ENCODE measurements at regions of chr17 and their contacts with region 1.

Region 1: GRCh38 chr17:32111141-32111771 is 31.0 kb upstream of the RHOT1 start:
- DNase-seq: peak; percentile 71
- H3K4me3 Mint-ChIP-seq: no peak overlapping the region
- H3K27ac Mint-ChIP-seq: no peak overlapping the region
- H3K4me1 Mint-ChIP-seq: peaks cover 18% of the 10 kb centered on the region
- H3K27me3 Mint-ChIP-seq: no peaks in the 10 kb centered on the region

Region 2: DNA sequence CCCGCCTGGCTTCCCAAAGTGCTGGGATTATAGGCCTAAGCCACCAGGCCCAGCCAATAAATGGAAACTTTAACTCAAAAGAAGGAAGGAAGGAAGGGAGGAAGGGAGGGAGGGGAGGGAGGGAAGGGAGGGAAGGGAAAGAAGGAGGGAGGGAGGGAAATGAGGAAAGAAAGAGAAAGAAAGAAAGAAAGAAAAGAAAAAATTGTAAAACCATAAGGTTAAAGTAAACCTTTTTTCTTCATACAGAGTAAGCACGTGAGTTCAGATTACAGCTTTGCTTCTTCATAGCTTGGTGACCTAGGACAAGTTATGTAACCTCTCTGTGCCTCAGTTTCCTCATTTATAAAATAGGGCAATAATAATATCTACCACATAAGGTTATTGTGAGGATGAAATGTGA is 78.0 kb before region 1 on chr17:
- CTCF ChIA-PET with region 1: no interaction called
- intact Hi-C with region 1: no loop called
- DNase-seq: no peak
- H3K4me3 Mint-ChIP-seq: no peak overlapping the region
- H3K27ac Mint-ChIP-seq: no peak overlapping the region
- H3K4me1 Mint-ChIP-seq: no peaks in the 10 kb centered on the region
- H3K27me3 Mint-ChIP-seq: no peaks in the 10 kb centered on the region

Region 3: DNA sequence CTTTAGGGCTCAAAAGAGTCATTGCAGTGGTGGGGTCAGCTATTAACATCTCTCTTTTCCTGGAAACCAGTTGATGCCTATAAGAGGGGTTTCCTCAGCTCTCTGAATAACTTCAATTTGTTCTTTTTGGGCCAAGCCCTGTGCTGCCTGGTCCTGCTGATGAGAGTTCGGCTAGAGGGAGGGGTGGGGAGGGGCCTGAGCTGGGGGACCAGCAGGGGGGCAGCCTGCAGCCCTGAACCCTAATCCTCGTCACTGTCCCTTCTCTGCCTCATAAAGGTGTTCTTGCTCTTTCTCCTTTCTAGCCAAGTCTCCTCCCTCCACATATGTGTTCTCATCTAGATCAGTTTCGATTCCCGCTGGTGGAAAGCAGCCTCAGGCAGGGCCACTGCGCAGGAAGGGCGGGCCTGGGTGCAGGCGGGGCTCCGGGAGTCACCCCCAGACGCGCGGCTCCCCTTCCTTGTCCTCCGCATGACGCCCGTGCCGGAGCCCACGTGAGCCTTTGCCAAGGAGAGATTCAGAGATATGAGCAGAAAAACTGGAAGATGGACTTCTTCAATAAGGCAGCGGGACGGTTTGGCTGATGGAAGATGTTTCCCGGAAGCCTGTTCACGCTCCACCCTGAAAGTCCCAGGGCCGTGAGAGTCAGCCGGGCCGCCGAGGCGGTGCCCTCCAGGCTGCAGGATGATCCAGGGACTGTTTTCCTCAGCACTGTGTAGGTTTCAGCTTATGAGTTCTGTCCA is 16.1 kb after region 1 on chr17:
- CTCF ChIA-PET with region 1: interaction called, 4 read pairs
- intact Hi-C with region 1: loop called (anchors 1 kb)
- DNase-seq: peak; percentile 88
- H3K4me3 Mint-ChIP-seq: peak overlapping the region; percentile 83
- H3K27ac Mint-ChIP-seq: peak overlapping the region; percentile 91
- H3K4me1 Mint-ChIP-seq: peaks cover 17% of the 10 kb centered on the region
- H3K27me3 Mint-ChIP-seq: no peaks in the 10 kb centered on the region

Region 4: GRCh38 chr17:32486111-32486700 is 374.9 kb after region 1 on chr17:
- CTCF ChIA-PET with region 1: no interaction called
- intact Hi-C with region 1: no loop called
- DNase-seq: peak; percentile 70
- H3K4me3 Mint-ChIP-seq: peak overlapping the region; percentile 45
- H3K27ac Mint-ChIP-seq: no peak overlapping the region
- H3K4me1 Mint-ChIP-seq: peaks cover 47% of the 10 kb centered on the region
- H3K27me3 Mint-ChIP-seq: no peaks in the 10 kb centered on the region

Measured in activated naive CD4-positive, alpha-beta T cell treated with anti-CD3 and anti-CD28 coated beads for 36 hours (primary cell).